ENCODE measurements at regions of chr2 and their contacts with region 1.

Region 1: DNA sequence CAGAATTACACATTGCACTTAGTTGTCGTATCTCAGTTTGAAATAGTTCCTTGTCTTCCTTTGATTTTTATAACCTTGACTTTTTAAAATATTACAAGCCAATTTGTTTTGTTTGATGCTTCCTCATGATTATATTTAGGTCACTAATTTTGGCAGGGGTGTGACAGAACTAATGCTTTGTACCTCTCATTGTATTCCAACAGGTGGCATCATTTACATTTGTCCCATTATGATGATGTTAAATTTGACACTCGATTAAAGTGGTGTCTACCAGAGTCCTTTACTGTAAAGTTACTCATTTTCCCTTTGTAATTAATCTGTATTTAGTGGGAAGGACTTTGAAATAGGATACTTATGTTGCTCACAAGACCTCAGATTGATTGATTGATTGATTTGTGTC is 21.5 kb upstream of the MFSD2B start:
- DNase-seq: no peak
- H3K4me3 ChIP-seq: no peak overlapping the region
- H3K27ac ChIP-seq: no peak overlapping the region
- H3K4me1 ChIP-seq: no peaks in the 10 kb centered on the region
- H3K27me3 ChIP-seq: no peaks in the 10 kb centered on the region
- CTCF ChIP-seq: no peak
- POLR2A ChIP-seq: no peak

Region 2: GRCh38 chr2:25726522-25726921 is 1738.2 kb after region 1 on chr2:
- intact Hi-C with region 1: loop called (anchors 10 kb)
- DNase-seq: no peak
- H3K4me3 ChIP-seq: no peak overlapping the region
- H3K27ac ChIP-seq: no peak overlapping the region
- H3K4me1 ChIP-seq: no peaks in the 10 kb centered on the region
- H3K27me3 ChIP-seq: no peaks in the 10 kb centered on the region
- CTCF ChIP-seq: no peak
- POLR2A ChIP-seq: no peak

Measured in vagina (tissue), 2 donors.